CD14-positive monocyte (primary cell): ENCODE measurements at regions of chr9 and their contacts with region 1.

Region 1: GRCh38 chr9:37550781-37551180 is 25.4 kb downstream of the FBXO10 start:
- DNase-seq: no peak
- H3K4me3 ChIP-seq: no peak overlapping the region
- H3K4me3 Mint-ChIP-seq: no peak overlapping the region
- H3K27ac ChIP-seq: no peak overlapping the region
- H3K27ac Mint-ChIP-seq: no peak overlapping the region
- H3K4me1 ChIP-seq: no peaks in the 10 kb centered on the region
- H3K4me1 Mint-ChIP-seq: no peaks in the 10 kb centered on the region
- H3K27me3 ChIP-seq: no peaks in the 10 kb centered on the region
- H3K27me3 Mint-ChIP-seq: peaks cover 0 to 2% (median 2%) of the 10 kb centered on the region in 3 donors
- CTCF ChIP-seq: no peak

Region 2: GRCh38 chr9:37364751-37365360 is 185.9 kb before region 1 on chr9:
- intact Hi-C with region 1: no loop called
- DNase-seq: no peak
- H3K4me3 ChIP-seq: no peak overlapping the region
- H3K4me3 Mint-ChIP-seq: no peak overlapping the region
- H3K27ac ChIP-seq: no peak overlapping the region
- H3K27ac Mint-ChIP-seq: no peak overlapping the region
- H3K4me1 ChIP-seq: no peaks in the 10 kb centered on the region
- H3K4me1 Mint-ChIP-seq: no peaks in the 10 kb centered on the region
- H3K27me3 ChIP-seq: no peaks in the 10 kb centered on the region
- H3K27me3 Mint-ChIP-seq: no peaks in the 10 kb centered on the region
- CTCF ChIP-seq: no peak

Region 3: DNA sequence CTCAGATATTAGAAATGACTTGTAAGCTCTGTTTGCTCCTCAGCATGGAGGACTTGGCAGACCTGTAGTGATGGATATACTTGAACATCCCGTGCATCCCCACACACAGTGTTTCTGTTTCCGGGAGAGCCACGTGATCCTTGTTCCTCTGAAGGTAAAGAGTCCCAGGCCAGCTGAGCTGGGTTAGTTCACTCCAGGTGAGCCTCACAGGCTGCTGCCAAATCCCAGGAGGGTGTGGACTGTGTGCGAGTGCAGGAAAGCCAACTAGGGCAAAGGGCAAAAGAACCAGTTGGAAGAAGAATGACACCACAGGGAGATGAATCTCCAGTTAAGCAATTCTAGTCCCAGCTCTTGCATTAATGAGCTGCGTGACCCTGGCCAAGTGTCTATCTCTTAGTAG is 52.0 kb after region 1 on chr9:
- intact Hi-C with region 1: loop called in 1 of 2 experiments (anchors 5 kb)
- DNase-seq: no peak
- H3K4me3 ChIP-seq: no peak overlapping the region
- H3K4me3 Mint-ChIP-seq: no peak overlapping the region
- H3K27ac ChIP-seq: no peak overlapping the region
- H3K27ac Mint-ChIP-seq: no peak overlapping the region
- H3K4me1 ChIP-seq: no peaks in the 10 kb centered on the region
- H3K4me1 Mint-ChIP-seq: no peaks in the 10 kb centered on the region
- H3K27me3 ChIP-seq: peaks cover 3 to 6% of the 10 kb centered on the region in 2 donors
- H3K27me3 Mint-ChIP-seq: peaks cover 4 to 21% (median 11%) of the 10 kb centered on the region in 3 donors
- CTCF ChIP-seq: no peak